HCT116 (cell line): ENCODE measurements at regions of chr2 and their contacts with region 1.

Region 1: GRCh38 chr2:159118115-159118858 is 149.8 kb downstream of the TANC1 start:
- DNase-seq: peak; percentile 57
- ATAC-seq: peak; percentile 95
- H3K4me3 ChIP-seq: no peak overlapping the region
- H3K27ac ChIP-seq: no peak overlapping the region
- H3K4me1 ChIP-seq: peaks cover 4 to 5% of the 10 kb centered on the region in 2 experiments; a peak in 3 of 4 replicates
- H3K27me3 ChIP-seq: no peaks in the 10 kb centered on the region
- CTCF ChIP-seq: peak; percentile 86 to 98 (median 94)
- POLR2A ChIP-seq: no peak
- RAD21 ChIP-seq: peak; percentile 95

Region 2: DNA sequence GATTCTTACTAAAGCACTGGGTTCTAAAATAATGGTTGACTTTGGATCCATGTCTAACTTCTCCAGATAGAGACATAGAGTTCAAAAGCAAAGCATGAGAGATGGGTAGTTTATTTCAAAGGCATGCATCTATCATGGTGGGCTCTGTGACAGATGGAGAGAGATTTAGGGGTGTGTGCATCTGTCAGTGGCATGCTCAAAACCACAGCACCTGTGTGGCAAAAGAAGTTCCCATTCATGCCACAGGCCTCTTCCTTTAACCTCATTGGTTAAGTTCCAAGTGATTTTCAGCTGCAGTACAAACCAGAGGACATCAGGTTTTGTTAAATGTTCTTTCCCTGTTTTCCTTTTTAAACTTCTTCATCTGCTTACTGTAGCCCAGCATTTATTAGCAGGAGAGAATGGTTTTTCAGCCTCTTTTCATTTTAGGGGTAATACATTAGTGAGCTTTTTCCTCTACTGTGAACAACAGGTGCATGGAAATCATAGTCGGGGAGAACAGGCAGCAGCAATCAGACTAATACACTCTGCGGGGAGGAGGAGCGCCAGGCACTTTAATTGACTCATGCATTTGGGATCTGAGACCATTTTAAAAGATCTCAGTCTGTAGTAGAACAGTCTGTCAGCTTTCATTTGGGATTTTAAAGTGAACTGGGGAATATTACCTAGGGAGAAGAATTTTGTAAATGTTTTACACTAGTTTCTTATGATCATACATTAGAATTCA is 1069.0 kb before region 1 on chr2:
- CTCF ChIA-PET with region 1: no interaction called
- POLR2A ChIA-PET with region 1: no interaction called
- RAD21 ChIA-PET with region 1: no interaction called
- intact Hi-C with region 1: no loop called
- DNase-seq: no peak
- ATAC-seq: no peak
- H3K4me3 ChIP-seq: no peak overlapping the region
- H3K27ac ChIP-seq: no peak overlapping the region
- H3K4me1 ChIP-seq: no peaks in the 10 kb centered on the region
- H3K27me3 ChIP-seq: no peaks in the 10 kb centered on the region
- CTCF ChIP-seq: no peak
- POLR2A ChIP-seq: no peak
- RAD21 ChIP-seq: no peak

Region 3: GRCh38 chr2:158806941-158807340 is 311.3 kb before region 1 on chr2:
- CTCF ChIA-PET with region 1: no interaction called
- POLR2A ChIA-PET with region 1: no interaction called
- RAD21 ChIA-PET with region 1: no interaction called
- intact Hi-C with region 1: no loop called
- DNase-seq: no peak
- ATAC-seq: no peak
- H3K4me3 ChIP-seq: no peak overlapping the region
- H3K27ac ChIP-seq: no peak overlapping the region
- H3K4me1 ChIP-seq: no peaks in the 10 kb centered on the region
- H3K27me3 ChIP-seq: 0 out of 2 replicates have a peak, but pooled peaks cover 5% of the 10 kb centered on the region
- CTCF ChIP-seq: no peak
- POLR2A ChIP-seq: no peak
- RAD21 ChIP-seq: no peak

Region 4: DNA sequence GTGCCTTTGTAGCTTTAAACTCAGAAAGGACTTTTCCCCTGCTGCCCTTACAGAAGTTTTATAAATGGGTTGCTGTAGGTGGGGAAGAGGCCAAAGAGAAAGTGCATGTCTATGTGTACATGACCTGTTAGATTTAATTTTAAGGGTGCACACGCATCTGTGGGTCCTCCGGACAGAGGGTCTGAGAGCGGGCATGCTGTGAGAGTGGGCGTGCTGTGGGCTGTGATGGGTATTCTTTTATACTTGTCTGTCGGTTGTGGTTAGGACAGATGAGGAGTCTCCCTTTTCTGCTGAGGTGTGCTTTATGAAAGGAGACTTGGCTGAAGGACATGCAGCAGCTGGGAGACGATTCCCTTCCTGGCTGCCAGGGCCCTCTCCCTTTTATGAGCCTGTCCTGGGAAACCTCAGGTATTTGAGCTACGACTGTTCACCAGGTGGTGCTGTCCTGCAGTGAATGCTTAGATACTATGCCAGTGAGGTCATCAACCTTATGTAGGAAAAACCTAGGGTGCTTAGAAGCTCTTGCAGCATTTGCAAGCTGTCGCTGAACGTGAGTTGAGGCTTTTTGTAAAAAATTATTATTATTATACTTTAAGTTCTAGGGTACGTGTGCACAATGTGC is 82.4 kb before region 1 on chr2:
- CTCF ChIA-PET with region 1: interaction called, 24 read pairs
- POLR2A ChIA-PET with region 1: interaction called, 3 read pairs
- RAD21 ChIA-PET with region 1: interaction called, 12 read pairs
- intact Hi-C with region 1: loop called (anchors 1 kb)
- DNase-seq: peak; percentile 62
- ATAC-seq: peak; percentile 99
- H3K4me3 ChIP-seq: no peak overlapping the region
- H3K27ac ChIP-seq: no peak overlapping the region
- H3K4me1 ChIP-seq: peaks cover 15 to 16% of the 10 kb centered on the region in 2 experiments
- H3K27me3 ChIP-seq: no peaks in the 10 kb centered on the region
- CTCF ChIP-seq: peak; percentile 56 to 65 (median 57)
- POLR2A ChIP-seq: no peak
- RAD21 ChIP-seq: peak; percentile 89

Region 5: GRCh38 chr2:159106109-159106508 is 12.2 kb before region 1 on chr2:
- CTCF ChIA-PET with region 1: no interaction called
- POLR2A ChIA-PET with region 1: no interaction called
- RAD21 ChIA-PET with region 1: no interaction called
- intact Hi-C with region 1: no loop called
- DNase-seq: no peak
- ATAC-seq: no peak
- H3K4me3 ChIP-seq: no peak overlapping the region
- H3K27ac ChIP-seq: no peak overlapping the region
- H3K4me1 ChIP-seq: peaks cover 0 to 3% of the 10 kb centered on the region in 2 experiments; a peak in 1 of 4 replicates
- H3K27me3 ChIP-seq: no peaks in the 10 kb centered on the region
- CTCF ChIP-seq: no peak
- POLR2A ChIP-seq: no peak
- RAD21 ChIP-seq: no peak

Region 6: GRCh38 chr2:159326569-159327255 is 208.4 kb after region 1 on chr2:
- CTCF ChIA-PET with region 1: no interaction called
- POLR2A ChIA-PET with region 1: no interaction called
- RAD21 ChIA-PET with region 1: no interaction called
- intact Hi-C with region 1: no loop called
- DNase-seq: no peak
- ATAC-seq: no peak
- H3K4me3 ChIP-seq: no peak overlapping the region
- H3K27ac ChIP-seq: no peak overlapping the region
- H3K4me1 ChIP-seq: no peaks in the 10 kb centered on the region
- H3K27me3 ChIP-seq: no peaks in the 10 kb centered on the region
- CTCF ChIP-seq: no peak
- POLR2A ChIP-seq: no peak
- RAD21 ChIP-seq: no peak